Activated naive CD4-positive, alpha-beta T cell treated with anti-CD3 and anti-CD28 coated beads for 36 hours (primary cell): ENCODE measurements at regions of chr17 and their contacts with region 1.

Region 1: DNA sequence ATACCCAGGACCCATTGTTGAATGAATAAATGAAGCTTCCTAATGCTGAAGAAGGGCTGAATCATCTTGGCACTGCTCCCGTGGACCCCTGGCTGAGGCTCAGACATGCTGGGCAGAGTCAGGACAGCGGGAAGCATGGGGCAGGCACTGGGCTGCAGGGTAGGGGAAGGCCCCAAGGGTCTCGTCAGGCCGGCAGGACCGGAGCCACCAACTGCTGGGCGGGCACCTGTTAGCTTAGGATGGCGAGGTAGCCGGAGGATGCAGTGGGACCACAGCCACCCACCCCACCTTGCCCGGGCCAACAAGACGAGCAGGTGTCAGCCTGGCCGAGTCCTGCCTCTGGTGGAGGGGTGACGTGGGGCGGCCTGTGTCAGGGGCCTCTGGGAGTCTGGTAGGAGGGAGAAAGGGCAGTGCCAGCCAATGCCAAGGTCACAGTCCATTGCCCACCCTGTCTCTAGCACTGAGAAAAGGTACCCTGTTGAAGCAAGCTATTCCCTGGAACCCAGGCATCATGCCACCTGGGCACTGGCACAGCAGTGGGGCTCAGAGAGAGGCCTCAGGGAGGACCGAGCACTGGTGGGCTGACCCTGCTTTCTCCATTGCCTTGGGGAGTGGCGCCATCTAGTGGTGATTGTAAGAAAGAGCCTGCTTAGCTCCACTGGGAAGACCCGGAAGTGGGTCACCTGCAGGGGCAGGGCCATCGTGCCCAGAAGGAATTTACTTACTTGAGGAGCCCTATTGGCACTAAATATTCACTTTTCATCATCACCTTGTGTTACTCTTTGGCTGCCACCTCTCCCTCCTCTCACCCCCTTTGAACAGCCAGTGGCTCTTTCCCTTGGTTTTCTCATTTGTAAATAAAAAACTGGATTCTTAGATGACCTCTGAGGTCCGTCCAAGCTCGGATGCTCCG is 3.0 kb upstream of the DLX3 start:
- DNase-seq: peak; percentile 92
- H3K4me3 Mint-ChIP-seq: no peak overlapping the region
- H3K27ac Mint-ChIP-seq: no peak overlapping the region
- H3K4me1 Mint-ChIP-seq: peaks cover 25% of the 10 kb centered on the region
- H3K27me3 Mint-ChIP-seq: peaks cover 61% of the 10 kb centered on the region

Region 2: DNA sequence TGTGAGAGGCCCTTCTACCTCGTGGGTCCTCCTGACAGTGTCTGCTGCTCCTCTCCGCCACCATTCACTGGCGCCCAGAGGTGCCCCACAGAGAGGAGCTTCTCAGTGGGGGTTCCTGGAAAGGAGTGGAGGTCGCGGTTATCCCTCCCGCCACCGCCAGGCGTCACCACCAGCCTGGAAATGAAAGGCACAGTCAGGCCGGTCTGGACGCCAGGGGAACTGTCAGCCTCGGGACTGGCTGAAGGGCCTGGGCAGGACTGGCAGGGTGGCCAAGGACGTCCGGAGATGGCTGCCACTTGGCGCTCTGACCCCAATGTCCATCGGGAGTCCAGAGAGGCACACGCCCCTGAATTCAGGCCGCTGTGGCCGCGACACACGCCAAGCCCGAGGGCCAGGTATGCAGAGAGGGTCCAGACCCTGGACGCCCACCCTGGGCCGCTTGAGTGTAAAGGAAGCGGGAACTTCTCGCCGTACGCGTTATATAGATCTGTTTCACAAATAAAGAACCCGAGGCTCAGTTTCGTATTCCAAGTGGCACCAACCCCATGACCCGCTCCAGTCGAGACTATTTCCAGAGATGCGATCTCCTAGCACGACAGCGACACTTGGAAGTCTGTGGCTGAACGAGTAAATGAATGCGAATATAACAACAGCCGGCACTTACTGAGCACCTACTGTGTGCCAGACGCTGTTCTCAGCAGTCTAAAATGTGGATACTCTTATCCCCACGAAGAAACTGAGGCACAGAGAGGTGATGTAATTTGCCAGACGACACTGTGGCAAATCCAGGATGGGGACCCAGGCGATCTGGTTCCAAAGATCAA is 430.0 kb before region 1 on chr17:
- CTCF ChIA-PET with region 1: interaction called, 25 read pairs
- intact Hi-C with region 1: loop called (anchors 1 kb)
- DNase-seq: peak; percentile 89
- H3K4me3 Mint-ChIP-seq: peak overlapping the region; percentile 74
- H3K27ac Mint-ChIP-seq: no peak overlapping the region
- H3K4me1 Mint-ChIP-seq: peaks cover 15% of the 10 kb centered on the region
- H3K27me3 Mint-ChIP-seq: peaks cover 8% of the 10 kb centered on the region

Region 3: DNA sequence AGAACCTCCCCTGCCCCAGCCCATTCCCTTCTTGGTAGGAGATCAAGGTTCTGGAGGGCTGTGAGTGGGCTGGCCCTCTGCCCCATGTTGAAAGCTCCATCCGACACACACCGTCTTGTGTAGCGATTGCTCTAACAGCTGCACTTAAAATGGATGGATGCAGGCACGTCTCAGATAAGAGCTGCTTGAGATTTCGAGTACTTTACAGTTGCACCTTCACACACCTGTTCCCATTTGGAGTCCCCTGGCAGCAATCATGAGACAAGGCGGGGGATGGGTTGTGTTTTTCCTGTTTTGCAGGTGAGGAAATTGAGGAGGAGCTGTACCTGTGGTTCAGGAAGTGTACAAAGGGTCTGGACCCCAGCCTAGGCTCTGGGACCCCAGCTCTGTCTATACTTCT is 124.6 kb before region 1 on chr17:
- CTCF ChIA-PET with region 1: interaction called, 77 read pairs
- intact Hi-C with region 1: no loop called
- DNase-seq: no peak
- H3K4me3 Mint-ChIP-seq: no peak overlapping the region
- H3K27ac Mint-ChIP-seq: no peak overlapping the region
- H3K4me1 Mint-ChIP-seq: peaks cover 19% of the 10 kb centered on the region
- H3K27me3 Mint-ChIP-seq: peaks cover 2% of the 10 kb centered on the region

Region 4: GRCh38 chr17:49910094-49910857 is 87.8 kb before region 1 on chr17:
- CTCF ChIA-PET with region 1: interaction called, 23 read pairs
- intact Hi-C with region 1: no loop called
- DNase-seq: peak; percentile 55
- H3K4me3 Mint-ChIP-seq: peak overlapping the region; percentile 53
- H3K27ac Mint-ChIP-seq: no peak overlapping the region
- H3K4me1 Mint-ChIP-seq: peaks cover 10% of the 10 kb centered on the region
- H3K27me3 Mint-ChIP-seq: peaks cover 68% of the 10 kb centered on the region

Region 5: GRCh38 chr17:49959183-49959935 is 38.7 kb before region 1 on chr17:
- CTCF ChIA-PET with region 1: interaction called, 48 read pairs
- intact Hi-C with region 1: loop called (anchors 2 kb)
- DNase-seq: no peak
- H3K4me3 Mint-ChIP-seq: no peak overlapping the region
- H3K27ac Mint-ChIP-seq: no peak overlapping the region
- H3K4me1 Mint-ChIP-seq: peaks cover 12% of the 10 kb centered on the region
- H3K27me3 Mint-ChIP-seq: peaks cover 29% of the 10 kb centered on the region

Region 6: DNA sequence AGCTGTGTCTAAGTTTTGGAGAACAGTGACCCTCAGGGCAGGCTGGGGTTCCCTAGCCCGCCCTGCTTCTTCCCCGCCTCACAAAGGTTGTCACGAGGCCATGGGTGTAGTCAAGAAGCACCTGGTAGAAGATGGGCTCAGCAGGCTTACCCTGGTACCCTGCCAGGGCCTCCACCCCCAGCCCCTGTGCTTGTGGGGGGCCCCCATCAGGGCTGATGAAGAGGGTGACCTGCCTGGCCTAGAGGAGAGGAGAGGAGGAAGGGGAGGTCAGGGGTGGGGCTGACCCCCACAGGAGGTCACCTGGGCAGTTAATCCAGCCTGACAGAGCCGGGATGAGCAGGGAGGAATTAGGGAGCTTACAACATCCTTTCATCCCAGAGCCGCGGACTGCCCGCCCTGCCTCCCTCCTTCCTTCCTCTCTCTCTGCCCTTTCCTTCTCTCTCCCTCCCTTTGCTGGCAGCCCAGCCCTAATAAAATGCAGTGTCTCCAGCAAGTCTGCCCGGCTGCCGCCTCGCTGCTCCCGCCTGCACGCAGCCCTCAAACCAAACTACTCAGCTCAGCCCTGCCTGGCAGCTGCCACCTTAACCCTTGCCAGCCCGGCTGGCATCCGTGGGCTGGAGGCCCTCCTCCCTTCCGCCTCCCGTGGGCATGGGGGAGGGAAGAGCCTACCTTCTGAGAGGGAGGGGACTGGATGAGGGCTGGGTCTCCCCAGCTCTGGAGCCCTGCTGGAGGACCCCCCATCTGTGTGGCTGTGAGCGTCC is 10.2 kb before region 1 on chr17:
- CTCF ChIA-PET with region 1: interaction called, 28 read pairs
- intact Hi-C with region 1: no loop called
- DNase-seq: no peak
- H3K4me3 Mint-ChIP-seq: no peak overlapping the region
- H3K27ac Mint-ChIP-seq: no peak overlapping the region
- H3K4me1 Mint-ChIP-seq: peaks cover under 1% of the 10 kb centered on the region
- H3K27me3 Mint-ChIP-seq: peaks cover 39% of the 10 kb centered on the region